Stomach (tissue), 19 donors: ENCODE measurements at regions of chrX and their contacts with region 1.

Region 1: GRCh38 chrX:153763989-153764755 is at the start of gene PLXNB3:
- DNase-seq: peak; percentile 88 to 89
- H3K4me3 ChIP-seq: peak within 1 kb of the TSS; percentile 17 to 34 (median 31)
- H3K27ac ChIP-seq: peak within 1 kb of the TSS in 3 of 5 donors; percentile 20 to 76 (median 72)
- H3K4me1 ChIP-seq: peaks cover 0 to 34% (median 26%) of the 10 kb centered on the region in 4 donors
- H3K27me3 ChIP-seq: peaks cover 0 to 3% (median 0%) of the 10 kb centered on the region in 3 donors
- CTCF ChIP-seq: peak in 5 of 7 experiments; percentile 53 to 90 (median 72)
- EP300 ChIP-seq: no peak
- POLR2A ChIP-seq: no peak
- total RNA-seq, gene PLXNB3: 1.8 to 49.2 (median 18.7) TPM

Region 2: GRCh38 chrX:153953342-153953830 is 189.2 kb after region 1 on chrX:
- intact Hi-C with region 1: loop called (anchors 5 kb)
- DNase-seq: peak; percentile 79 to 86
- H3K4me3 ChIP-seq: peak overlapping the region in 2 of 4 donors; percentile 3 to 13
- H3K27ac ChIP-seq: peak overlapping the region in 4 of 5 donors; percentile 29 to 79 (median 73)
- H3K4me1 ChIP-seq: peaks cover 0 to 34% (median 10%) of the 10 kb centered on the region in 4 donors
- H3K27me3 ChIP-seq: no peaks in the 10 kb centered on the region
- CTCF ChIP-seq: peak in 5 of 7 experiments; percentile 87 to 99 (median 97)
- EP300 ChIP-seq: no peak
- POLR2A ChIP-seq: no peak